ENCODE measurements at regions of chr9 and their contacts with region 1.

Region 1: GRCh38 chr9:127770905-127771569 is 7.4 kb downstream of the SH2D3C start:
- DNase-seq: peak; percentile 99
- H3K4me3 Mint-ChIP-seq: peak overlapping the region; percentile 86
- H3K27ac Mint-ChIP-seq: peak overlapping the region; percentile 90
- H3K4me1 Mint-ChIP-seq: peaks cover 63% of the 10 kb centered on the region
- H3K27me3 Mint-ChIP-seq: no peaks in the 10 kb centered on the region

Region 2: DNA sequence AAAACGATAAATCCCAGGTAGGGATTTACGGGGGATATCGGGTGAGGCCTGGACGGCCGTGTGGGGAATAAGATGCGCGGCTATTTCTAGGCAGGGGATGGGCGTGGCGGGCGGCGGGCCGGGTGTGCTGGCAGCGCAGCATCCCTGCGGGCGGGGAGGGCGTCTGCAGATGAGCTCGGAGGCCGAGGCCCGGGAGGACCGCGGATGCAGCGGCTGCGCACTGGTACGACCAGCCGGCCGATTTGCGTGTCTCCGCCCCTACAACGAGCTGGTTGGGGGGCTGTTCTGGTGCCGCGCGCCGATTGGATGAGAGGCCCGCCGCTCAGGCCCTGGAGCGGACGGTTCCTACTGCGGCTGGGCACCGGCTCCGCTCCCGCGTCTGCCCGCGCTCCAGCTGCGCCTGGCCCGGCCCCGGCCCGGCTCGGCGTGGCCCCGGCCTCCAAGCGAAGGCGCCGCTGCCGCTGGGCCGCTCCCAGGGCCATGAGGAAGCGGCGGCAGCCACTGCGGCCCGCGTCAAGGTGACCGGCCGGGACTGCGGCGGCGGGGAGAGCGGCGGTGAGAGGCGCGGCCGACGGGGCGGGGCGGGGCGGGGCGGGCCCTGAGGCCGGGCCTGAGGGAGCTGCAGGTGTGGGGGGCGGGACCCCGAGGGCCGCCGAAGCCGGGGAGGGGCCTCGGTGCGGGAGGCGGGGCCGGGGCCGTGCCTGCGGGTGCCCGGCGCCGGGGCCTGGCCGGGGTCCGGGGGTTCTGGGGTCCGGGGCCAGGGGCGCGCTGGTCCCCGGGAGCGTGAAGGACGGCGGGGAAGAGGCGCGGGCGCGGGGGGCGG is 856.4 kb before region 1 on chr9 and contains the start of gene RALGPS1:
- intact Hi-C with region 1: loop called (anchors 2 kb)
- DNase-seq: peak; percentile 91
- H3K4me3 Mint-ChIP-seq: peak within 1 kb of the TSS; percentile 73
- H3K27ac Mint-ChIP-seq: no peak within 1 kb of the TSS
- H3K4me1 Mint-ChIP-seq: peaks cover 6% of the 10 kb centered on the region
- H3K27me3 Mint-ChIP-seq: peaks cover 17% of the 10 kb centered on the region
- total RNA-seq, gene RALGPS1: 1.4 and 1.8 TPM in 2 replicates

Region 3: DNA sequence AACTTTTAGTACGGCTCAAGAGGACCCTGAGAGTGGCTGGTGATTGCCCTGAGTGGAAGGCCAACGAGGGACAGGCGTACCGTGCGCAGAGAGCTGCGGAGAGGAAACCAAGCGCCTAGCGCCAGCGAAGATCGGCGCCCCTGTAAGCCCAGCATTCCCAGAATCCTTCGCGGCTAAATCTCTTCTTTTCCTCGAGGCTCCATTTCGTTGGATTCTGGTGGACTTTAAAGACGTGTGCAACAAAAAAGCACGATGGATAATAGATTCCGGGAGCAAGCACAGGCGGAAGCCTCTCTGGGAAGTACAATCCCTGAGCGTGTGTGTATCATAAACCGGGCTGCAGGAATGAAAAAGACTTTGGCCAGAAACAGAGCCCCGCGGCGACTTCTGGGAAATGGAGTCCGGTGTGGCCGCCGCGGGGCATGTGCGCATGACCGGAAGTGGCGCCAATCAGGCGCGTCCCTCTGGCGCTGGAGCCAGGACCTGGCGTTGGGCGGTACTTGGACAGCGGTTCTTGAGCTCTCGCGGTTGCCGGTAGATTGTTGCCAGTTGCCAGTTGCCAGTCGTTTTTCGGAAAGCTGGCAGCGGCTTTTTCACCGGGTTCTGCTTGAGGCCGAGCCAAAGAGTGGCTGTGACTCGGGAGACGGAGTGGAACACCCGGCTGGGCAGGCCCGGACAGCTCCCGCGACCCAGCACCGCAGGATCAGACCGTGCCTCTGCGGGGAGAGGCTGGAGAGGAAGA is 346.9 kb before region 1 on chr9 and contains the start of gene ZNF79:
- intact Hi-C with region 1: loop called (anchors 10 kb)
- DNase-seq: peak; percentile 92
- H3K4me3 Mint-ChIP-seq: peak within 1 kb of the TSS; percentile 99
- H3K27ac Mint-ChIP-seq: peak within 1 kb of the TSS; percentile 97
- H3K4me1 Mint-ChIP-seq: peaks cover 59% of the 10 kb centered on the region
- H3K27me3 Mint-ChIP-seq: peaks cover 3% of the 10 kb centered on the region
- total RNA-seq, gene ZNF79: 21.7 and 23.1 TPM in 2 replicates

Region 4: DNA sequence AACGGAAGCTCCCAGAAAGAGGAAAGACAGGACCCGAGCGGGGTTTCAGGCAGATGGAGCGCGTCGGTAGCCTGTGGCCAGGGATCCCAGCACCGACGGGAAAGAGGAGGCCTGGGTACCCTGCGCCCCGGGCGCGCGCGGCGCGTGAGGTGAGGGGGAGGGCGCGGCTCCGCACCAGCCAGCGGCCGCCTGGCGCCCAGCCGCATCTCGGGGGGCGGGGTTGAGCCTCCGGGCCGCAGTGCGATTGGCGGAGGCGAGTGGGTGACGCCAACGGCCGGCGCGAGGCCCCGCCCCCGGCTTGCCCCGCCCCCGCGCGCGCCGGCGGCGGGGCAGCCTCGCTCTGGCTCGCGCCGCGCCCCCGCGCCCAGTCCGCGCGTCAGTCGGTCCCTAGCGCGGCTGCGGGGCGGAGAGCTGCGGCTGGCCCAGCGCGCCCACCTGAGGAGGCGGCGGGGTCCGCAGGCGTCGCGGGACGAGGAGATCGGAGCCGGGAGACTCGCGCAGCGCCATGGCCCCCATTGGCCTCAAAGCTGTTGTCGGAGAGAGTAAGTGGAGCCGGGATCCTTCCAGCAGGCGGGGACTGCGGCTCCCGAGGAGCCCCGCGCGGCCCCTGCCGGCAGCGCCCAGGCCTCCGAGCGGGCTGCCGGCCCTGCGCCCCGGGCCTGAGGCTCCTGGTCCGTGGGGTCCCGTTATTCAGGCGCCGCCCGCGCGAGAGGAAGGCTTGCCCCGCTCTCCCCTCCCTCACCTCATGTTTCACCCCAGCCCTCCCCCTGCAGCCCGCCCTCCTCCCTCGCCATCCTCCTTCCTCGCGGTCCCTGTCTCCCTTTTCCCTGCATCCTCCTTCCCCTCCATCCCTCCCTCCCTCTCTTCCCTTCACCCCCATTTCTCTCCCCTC is 158.9 kb before region 1 on chr9 and contains the start of gene STXBP1:
- intact Hi-C with region 1: loop called (anchors 2 kb)
- DNase-seq: peak; percentile 89
- H3K4me3 Mint-ChIP-seq: peak within 1 kb of the TSS; percentile 95
- H3K27ac Mint-ChIP-seq: peak within 1 kb of the TSS; percentile 91
- H3K4me1 Mint-ChIP-seq: peaks cover 40% of the 10 kb centered on the region
- H3K27me3 Mint-ChIP-seq: peaks cover 45% of the 10 kb centered on the region
- total RNA-seq, gene STXBP1: 26.1 and 32.9 TPM in 2 replicates

Region 5: DNA sequence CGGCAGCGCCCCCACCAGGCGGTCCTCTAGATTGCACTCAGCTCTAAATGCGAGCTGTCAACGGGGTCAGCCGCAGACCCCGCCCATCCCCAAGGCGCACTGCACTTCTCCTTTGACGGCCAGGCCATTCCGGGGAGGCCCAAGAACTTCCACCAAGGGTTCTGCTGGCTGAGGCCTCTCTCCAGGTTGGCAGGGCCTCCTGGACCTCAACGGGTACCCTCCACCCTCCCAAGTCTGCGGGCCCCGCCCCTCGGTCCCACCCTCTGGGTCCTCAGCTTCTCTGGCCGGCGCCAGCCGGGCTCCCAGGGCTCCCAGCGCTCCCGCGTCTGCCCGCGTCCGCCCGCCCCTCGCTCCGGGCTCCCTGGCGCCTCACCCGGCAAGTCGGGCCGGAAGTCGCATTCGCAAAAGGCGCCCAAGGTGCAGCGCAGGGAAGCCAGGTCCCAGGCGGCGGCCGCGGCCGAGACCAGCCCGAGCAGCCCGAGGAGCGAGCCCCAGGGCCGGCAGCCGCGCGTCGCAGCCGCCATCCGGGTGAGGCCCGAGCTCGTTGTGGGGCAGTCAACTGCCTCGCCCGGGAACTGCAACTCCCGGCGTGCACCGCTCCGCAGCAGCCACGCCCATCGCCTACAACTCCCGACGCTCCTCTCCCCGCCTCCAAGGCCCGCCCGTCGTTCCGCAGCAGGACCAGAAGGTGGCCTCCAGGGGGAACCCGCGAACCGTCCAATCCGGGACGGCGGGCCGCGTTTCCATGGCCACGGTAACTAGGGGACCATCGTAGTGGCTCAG is 36.1 kb before region 1 on chr9 and contains the start of gene TOR2A:
- intact Hi-C with region 1: loop called (anchors 1 kb)
- DNase-seq: peak; percentile 98
- H3K4me3 Mint-ChIP-seq: peak within 1 kb of the TSS; percentile 89
- H3K27ac Mint-ChIP-seq: peak within 1 kb of the TSS; percentile 96
- H3K4me1 Mint-ChIP-seq: peaks cover 15% of the 10 kb centered on the region
- H3K27me3 Mint-ChIP-seq: no peaks in the 10 kb centered on the region
- total RNA-seq, gene TOR2A: 16.6 and 18.9 TPM in 2 replicates

Region 6: DNA sequence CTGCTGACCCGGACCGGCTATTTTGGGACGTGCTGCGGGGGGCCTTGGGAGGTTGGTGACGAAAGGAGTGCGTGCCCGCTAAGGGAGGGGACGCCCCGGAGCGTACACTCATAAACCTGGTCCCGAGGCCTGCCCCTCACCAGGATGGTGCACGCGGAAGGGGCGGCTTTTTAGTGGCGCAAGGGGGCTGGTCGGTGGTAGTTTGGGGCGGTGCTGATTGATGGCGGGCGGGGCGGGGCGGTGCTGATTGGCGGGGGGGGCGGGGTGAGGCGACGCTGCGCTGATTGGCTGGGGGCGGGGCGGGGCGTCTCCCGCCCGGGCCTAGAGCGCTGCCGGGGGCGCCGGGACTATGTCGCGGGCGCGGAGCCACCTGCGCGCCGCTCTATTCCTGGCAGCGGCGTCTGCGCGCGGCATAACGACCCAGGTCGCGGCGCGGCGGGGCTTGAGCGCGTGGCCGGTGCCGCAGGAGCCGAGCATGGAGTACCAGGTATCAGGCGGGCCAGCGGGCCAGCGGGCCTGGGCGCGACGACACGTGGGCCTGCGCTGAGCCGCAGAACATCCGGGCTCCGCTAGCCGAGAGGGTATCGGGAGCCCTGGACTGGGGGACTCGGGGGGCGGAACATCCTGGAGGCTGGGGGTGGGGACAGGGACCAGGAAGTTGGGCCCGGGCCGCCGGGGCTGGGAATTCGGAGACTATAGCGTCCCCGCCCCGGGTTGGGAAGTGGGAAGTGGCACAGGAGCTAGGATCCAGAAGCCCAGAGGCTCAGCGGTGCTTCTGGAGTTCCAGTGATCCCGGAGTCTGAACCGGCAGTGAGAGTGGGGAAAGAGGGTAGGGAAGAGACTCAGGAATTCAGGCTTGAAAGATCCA is 31.8 kb after region 1 on chr9 and contains the start of gene FPGS:
- intact Hi-C with region 1: loop called (anchors 1 kb)
- DNase-seq: peak; percentile 74
- H3K4me3 Mint-ChIP-seq: peak within 1 kb of the TSS; percentile 97
- H3K27ac Mint-ChIP-seq: peak within 1 kb of the TSS; percentile 93
- H3K4me1 Mint-ChIP-seq: peaks cover 17% of the 10 kb centered on the region
- H3K27me3 Mint-ChIP-seq: no peaks in the 10 kb centered on the region
- total RNA-seq, gene FPGS: 128 and 130 TPM in 2 replicates

Region 7: GRCh38 chr9:127943731-127944144 is 172.7 kb after region 1 on chr9:
- intact Hi-C with region 1: no loop called
- DNase-seq: peak; percentile 65
- H3K4me3 Mint-ChIP-seq: no peak overlapping the region
- H3K27ac Mint-ChIP-seq: no peak overlapping the region
- H3K4me1 Mint-ChIP-seq: peaks cover 14% of the 10 kb centered on the region
- H3K27me3 Mint-ChIP-seq: peaks cover 2% of the 10 kb centered on the region

Region 8: DNA sequence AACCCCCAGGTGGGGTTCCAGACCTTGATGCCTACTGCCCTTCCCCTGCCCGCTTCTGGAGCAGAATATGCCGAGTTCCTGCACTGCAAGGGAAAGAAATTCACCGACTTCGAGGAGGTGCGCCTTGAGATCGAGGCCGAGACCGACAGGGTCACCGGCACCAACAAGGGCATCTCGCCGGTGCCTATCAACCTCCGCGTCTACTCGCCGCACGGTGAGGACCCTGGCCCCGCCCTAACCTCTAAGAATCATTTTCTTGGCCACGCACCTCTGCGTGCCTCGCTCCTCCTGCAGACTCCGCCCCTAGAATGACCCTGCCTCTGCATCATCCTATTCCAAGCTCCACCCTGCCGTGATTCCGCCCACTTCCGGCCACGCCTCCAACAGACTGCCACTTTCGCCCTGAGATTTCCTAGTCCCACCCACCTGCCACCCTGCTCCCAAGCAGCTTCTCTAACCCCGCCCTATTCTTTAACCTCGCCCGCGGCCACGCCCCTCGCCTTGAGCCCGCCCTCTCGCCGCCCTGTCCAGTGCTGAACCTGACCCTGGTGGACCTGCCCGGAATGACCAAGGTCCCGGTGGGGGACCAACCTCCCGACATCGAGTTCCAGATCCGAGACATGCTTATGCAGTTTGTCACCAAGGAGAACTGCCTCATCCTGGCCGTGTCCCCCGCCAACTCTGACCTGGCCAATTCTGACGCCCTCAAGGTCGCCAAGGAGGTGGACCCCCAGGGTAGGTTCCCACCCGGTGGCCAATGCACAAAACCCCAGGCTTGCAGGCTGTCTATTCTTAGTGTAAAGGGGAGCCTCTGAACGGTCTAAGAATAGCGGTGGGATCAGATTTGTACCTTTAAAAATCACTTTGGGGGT is 447.7 kb after region 1 on chr9:
- intact Hi-C with region 1: loop called (anchors 5 kb)
- DNase-seq: peak; percentile 92
- H3K4me3 Mint-ChIP-seq: peak overlapping the region; percentile 75
- H3K27ac Mint-ChIP-seq: peak overlapping the region; percentile 4
- H3K4me1 Mint-ChIP-seq: peaks cover 7% of the 10 kb centered on the region
- H3K27me3 Mint-ChIP-seq: peaks cover 1% of the 10 kb centered on the region